RWPE1 (cell line): ENCODE measurements at regions of chr10 and their contacts with region 1.

Region 1: GRCh38 chr10:43202224-43202656 is 64.0 kb downstream of the CSGALNACT2 start:
- DNase-seq: no peak
- H3K27ac ChIP-seq: no peak overlapping the region
- CTCF ChIP-seq: peak; percentile 17; the same call in 1 of the 2 replicates

Region 2: DNA sequence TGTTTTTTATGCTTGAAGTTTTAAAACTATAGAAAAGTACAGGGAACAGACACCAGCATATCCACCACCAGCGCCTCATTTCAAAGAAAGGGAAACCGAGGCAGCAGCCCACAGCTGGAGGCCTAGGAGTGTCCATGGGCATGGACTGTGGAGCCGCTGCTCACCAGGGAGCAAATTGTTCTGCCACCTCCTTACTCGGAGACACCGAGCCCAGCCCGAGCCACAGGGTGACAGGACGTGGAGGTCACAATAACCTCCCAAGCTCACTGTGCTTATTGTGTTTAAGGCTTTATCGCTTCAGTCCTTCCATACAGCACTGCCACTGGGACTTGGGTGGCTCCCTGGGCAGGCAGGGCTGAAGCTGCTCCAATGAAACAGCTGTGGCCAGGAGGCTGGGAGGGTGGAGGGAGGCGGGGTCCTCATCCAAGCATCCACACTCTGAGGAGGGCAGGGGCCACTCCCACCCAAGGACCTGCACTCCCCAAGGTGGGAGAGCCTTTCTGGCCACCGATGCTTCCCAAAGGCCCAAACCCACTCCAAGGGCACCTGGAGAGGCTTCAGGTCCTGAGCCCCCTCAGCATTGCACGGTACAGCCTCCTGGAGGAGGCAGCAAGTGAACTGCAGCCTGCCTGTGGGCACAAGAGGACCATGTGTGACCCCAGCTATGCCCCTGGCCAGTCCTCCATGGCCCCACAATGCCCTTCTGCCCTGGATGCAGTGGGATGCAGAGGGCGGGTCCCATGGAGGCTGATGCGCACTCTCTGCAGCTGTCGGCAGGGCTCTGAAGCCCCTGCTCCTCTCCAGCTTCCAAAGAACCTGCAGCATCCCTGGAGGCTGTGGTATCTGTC is 164.1 kb before region 1 on chr10:
- CTCF ChIA-PET with region 1: no interaction called
- POLR2A ChIA-PET with region 1: no interaction called
- DNase-seq: no peak
- H3K27ac ChIP-seq: no peak overlapping the region
- CTCF ChIP-seq: no peak

Region 3: GRCh38 chr10:43156590-43157341 is 45.5 kb before region 1 on chr10:
- CTCF ChIA-PET with region 1: interaction called, 10 read pairs
- POLR2A ChIA-PET with region 1: no interaction called
- DNase-seq: no peak
- H3K27ac ChIP-seq: no peak overlapping the region
- CTCF ChIP-seq: no peak

Region 4: DNA sequence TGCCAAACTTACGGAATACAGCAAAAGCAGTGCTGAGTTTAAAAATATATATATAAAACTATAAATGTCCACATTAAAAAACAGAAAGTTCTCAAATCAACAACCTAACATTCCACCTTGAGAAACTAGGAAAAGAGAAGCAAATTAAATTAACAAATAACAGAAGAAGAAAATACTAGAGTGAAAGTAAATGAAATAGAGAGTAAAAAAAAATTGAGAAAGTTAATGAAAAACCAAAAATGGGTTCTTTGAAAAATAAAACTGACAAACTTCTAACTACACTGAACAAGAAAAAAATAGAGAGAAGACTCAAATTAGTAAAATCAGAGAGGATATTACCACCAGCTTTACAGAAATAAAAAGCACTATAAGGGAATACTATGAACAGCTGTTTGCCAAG is 42.5 kb after region 1 on chr10:
- CTCF ChIA-PET with region 1: no interaction called
- POLR2A ChIA-PET with region 1: no interaction called
- DNase-seq: no peak
- H3K27ac ChIP-seq: no peak overlapping the region
- CTCF ChIP-seq: no peak